ENCODE measurements at regions of chr3 and their contacts with region 1.

Region 1: GRCh38 chr3:138434276-138434874 is at the start of gene ESYT3:
- DNase-seq: peak; percentile 81
- H3K4me3 Mint-ChIP-seq: peak within 1 kb of the TSS; percentile 71
- H3K27ac Mint-ChIP-seq: no peak within 1 kb of the TSS
- H3K4me1 Mint-ChIP-seq: peaks cover 18% of the 10 kb centered on the region
- H3K27me3 Mint-ChIP-seq: peaks cover 93% of the 10 kb centered on the region

Region 2: DNA sequence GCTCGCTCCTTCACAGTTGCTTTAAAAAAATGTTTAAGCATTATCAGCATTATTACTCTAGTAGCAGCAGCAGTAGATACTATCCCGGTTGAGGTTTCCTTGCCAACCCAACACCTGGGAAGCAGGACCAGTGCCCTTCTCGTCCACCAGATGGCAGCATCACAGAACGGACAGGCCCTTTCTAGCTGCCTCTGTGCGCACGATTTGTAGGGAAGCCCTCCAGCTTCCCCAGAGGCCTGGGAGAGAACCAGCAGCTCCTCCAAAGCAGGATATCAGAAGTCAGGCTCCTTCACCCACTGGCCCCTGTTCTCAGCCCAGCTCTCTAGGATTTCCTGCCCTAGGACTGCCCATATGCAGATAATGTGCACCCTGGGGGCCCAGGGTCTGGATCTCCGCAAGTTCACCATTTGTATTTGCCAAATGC is 16.8 kb before region 1 on chr3:
- CTCF ChIA-PET with region 1: interaction called, 16 read pairs
- DNase-seq: peak; percentile 76
- H3K4me3 Mint-ChIP-seq: no peak overlapping the region
- H3K27ac Mint-ChIP-seq: no peak overlapping the region
- H3K4me1 Mint-ChIP-seq: no peaks in the 10 kb centered on the region
- H3K27me3 Mint-ChIP-seq: peaks cover 44% of the 10 kb centered on the region